Caco-2 (cell line): ENCODE measurements at regions of chrX and their contacts with region 1.

Region 1: DNA sequence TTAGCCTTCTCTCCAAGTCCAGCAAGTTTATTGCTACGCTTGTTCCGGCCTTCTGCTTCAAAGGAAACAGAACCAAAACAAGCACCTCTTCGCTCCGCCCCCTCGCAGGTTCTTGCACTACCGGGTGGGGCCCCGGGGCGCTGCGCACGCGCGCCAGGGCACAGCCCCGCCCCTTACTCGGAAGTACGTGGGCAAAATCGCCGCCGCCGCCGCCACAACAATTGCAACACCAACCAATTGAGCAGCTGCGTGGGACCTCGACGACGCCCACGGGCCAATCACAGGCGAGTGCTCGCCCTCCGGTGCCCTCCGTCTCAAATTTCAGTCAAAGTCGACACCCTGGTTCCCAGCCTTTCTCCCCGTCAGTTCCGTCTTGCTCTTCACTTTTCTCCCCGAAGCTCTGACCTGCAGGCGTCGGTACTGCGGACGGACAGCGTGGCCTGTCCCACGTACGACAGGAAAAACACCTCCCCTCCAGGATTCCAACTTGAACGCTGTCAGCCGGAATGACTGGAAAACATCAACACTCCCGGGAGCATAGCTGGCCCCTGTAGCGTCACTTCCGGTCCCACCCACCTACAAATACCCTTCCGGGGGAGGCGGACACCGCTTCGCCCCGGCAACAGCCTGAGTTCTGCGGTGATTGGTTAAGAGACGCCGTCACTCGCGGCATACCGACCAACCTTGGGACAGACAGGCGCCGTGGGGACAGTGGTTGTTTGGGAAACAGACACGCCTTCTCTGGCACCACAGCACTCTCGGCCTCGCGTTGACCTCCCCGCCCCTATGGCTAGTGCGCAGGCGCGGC is 624 bp upstream of the OTUD5 start:
- DNase-seq: peak; percentile 94 to 97
- H3K4me3 ChIP-seq: peak overlapping the region; percentile 73
- H3K4me3 Mint-ChIP-seq: peak overlapping the region; percentile 98
- H3K27ac Mint-ChIP-seq: peak overlapping the region; percentile 100
- H3K4me1 ChIP-seq: no peaks in the 10 kb centered on the region
- H3K4me1 Mint-ChIP-seq: peaks cover 15% of the 10 kb centered on the region
- H3K27me3 ChIP-seq: no peaks in the 10 kb centered on the region
- H3K27me3 Mint-ChIP-seq: no peaks in the 10 kb centered on the region
- CTCF ChIP-seq: no peak

Region 2: GRCh38 chrX:48917139-48918001 is 40.7 kb before region 1 on chrX:
- CTCF ChIA-PET with region 1: no interaction called
- POLR2A ChIA-PET with region 1: interaction called, 4 read pairs
- intact Hi-C with region 1: loop called (anchors 2 kb)
- DNase-seq: peak; percentile 87 to 88
- H3K4me3 ChIP-seq: peak overlapping the region; percentile 80
- H3K4me3 Mint-ChIP-seq: peak overlapping the region; percentile 91
- H3K27ac Mint-ChIP-seq: peak overlapping the region; percentile 90
- H3K4me1 ChIP-seq: peaks cover 10% of the 10 kb centered on the region; the same call in 1 of the 2 replicates
- H3K4me1 Mint-ChIP-seq: peaks cover 24% of the 10 kb centered on the region
- H3K27me3 ChIP-seq: no peaks in the 10 kb centered on the region
- H3K27me3 Mint-ChIP-seq: no peaks in the 10 kb centered on the region
- CTCF ChIP-seq: peak; percentile 80 to 84

Region 3: DNA sequence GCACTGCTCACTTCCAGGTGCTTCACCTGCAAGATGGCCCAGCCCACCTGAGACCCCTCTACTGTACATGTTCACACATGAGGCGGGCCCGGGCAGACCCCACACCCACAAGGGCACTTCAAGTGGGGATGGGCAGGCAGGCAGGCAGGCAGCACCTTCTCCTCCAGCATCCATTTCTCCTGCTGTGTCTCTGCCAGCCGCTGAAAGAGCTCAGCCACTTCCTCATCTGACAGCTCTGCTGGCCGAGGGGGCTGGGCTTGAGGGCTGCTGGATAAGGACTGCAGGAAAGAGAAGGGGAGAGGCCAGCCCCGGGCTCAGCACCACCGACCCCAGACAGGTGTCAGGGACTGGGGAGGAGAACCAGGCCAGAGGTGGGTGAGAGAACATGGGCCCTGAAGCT is 18.1 kb after region 1 on chrX:
- CTCF ChIA-PET with region 1: no interaction called
- POLR2A ChIA-PET with region 1: no interaction called
- intact Hi-C with region 1: no loop called
- DNase-seq: no peak
- H3K4me3 ChIP-seq: no peak overlapping the region
- H3K4me3 Mint-ChIP-seq: no peak overlapping the region
- H3K27ac Mint-ChIP-seq: no peak overlapping the region
- H3K4me1 ChIP-seq: no peaks in the 10 kb centered on the region
- H3K4me1 Mint-ChIP-seq: no peaks in the 10 kb centered on the region
- H3K27me3 ChIP-seq: no peaks in the 10 kb centered on the region
- H3K27me3 Mint-ChIP-seq: no peaks in the 10 kb centered on the region
- CTCF ChIP-seq: no peak

Region 4: GRCh38 chrX:49100704-49101628 is 142.9 kb after region 1 on chrX:
- CTCF ChIA-PET with region 1: no interaction called
- POLR2A ChIA-PET with region 1: interaction called, 10 read pairs
- intact Hi-C with region 1: no loop called
- DNase-seq: peak; percentile 92 to 93
- H3K4me3 ChIP-seq: peak overlapping the region; percentile 72
- H3K4me3 Mint-ChIP-seq: peak overlapping the region; percentile 79
- H3K27ac Mint-ChIP-seq: peak overlapping the region; percentile 66
- H3K4me1 ChIP-seq: no peaks in the 10 kb centered on the region
- H3K4me1 Mint-ChIP-seq: peaks cover 6% of the 10 kb centered on the region
- H3K27me3 ChIP-seq: no peaks in the 10 kb centered on the region
- H3K27me3 Mint-ChIP-seq: no peaks in the 10 kb centered on the region
- CTCF ChIP-seq: no peak